Activated CD4-positive, alpha-beta memory T cell treated with anti-CD3 and anti-CD28 coated beads for 36 hours (primary cell): ENCODE measurements at regions of chr5 and their contacts with region 1.

Region 1: GRCh38 chr5:134738133-134738962 is at the start of gene CAMLG:
- DNase-seq: peak; percentile 98
- H3K4me3 Mint-ChIP-seq: peak within 1 kb of the TSS; percentile 95
- H3K27ac Mint-ChIP-seq: peak within 1 kb of the TSS; percentile 89
- H3K4me1 Mint-ChIP-seq: peaks cover 24% of the 10 kb centered on the region
- H3K27me3 Mint-ChIP-seq: no peaks in the 10 kb centered on the region
- total RNA-seq, gene CAMLG: 40.3 to 41.2 TPM

Region 2: GRCh38 chr5:134176511-134177368 is 561.6 kb before region 1 on chr5 and contains the start of gene SKP1:
- CTCF ChIA-PET with region 1: no interaction called
- POLR2A ChIA-PET with region 1: no interaction called
- intact Hi-C with region 1: loop called (anchors 1 kb)
- DNase-seq: peak; percentile 88
- H3K4me3 Mint-ChIP-seq: peak within 1 kb of the TSS; percentile 95
- H3K27ac Mint-ChIP-seq: peak within 1 kb of the TSS; percentile 96
- H3K4me1 Mint-ChIP-seq: peaks cover 33% of the 10 kb centered on the region
- H3K27me3 Mint-ChIP-seq: no peaks in the 10 kb centered on the region
- total RNA-seq, gene SKP1: 284 to 286 TPM

Region 3: GRCh38 chr5:134609232-134609851 is 129.0 kb before region 1 on chr5:
- CTCF ChIA-PET with region 1: interaction called, 4 read pairs
- POLR2A ChIA-PET with region 1: interaction called, 4 read pairs
- intact Hi-C with region 1: loop called (anchors 2 kb)
- DNase-seq: peak; percentile 19
- H3K4me3 Mint-ChIP-seq: peak overlapping the region; percentile 52
- H3K27ac Mint-ChIP-seq: peak overlapping the region; percentile 97
- H3K4me1 Mint-ChIP-seq: peaks cover 54% of the 10 kb centered on the region
- H3K27me3 Mint-ChIP-seq: no peaks in the 10 kb centered on the region

Region 4: GRCh38 chr5:134749415-134749814 is 11.1 kb after region 1 on chr5:
- CTCF ChIA-PET with region 1: interaction called, 19 read pairs
- POLR2A ChIA-PET with region 1: no interaction called
- intact Hi-C with region 1: no loop called
- DNase-seq: no peak
- H3K4me3 Mint-ChIP-seq: no peak overlapping the region
- H3K27ac Mint-ChIP-seq: no peak overlapping the region
- H3K4me1 Mint-ChIP-seq: no peaks in the 10 kb centered on the region
- H3K27me3 Mint-ChIP-seq: no peaks in the 10 kb centered on the region

Region 5: GRCh38 chr5:134794082-134794481 is 55.7 kb after region 1 on chr5:
- CTCF ChIA-PET with region 1: no interaction called
- POLR2A ChIA-PET with region 1: no interaction called
- intact Hi-C with region 1: no loop called
- DNase-seq: no peak
- H3K4me3 Mint-ChIP-seq: no peak overlapping the region
- H3K27ac Mint-ChIP-seq: no peak overlapping the region
- H3K4me1 Mint-ChIP-seq: peaks cover 10% of the 10 kb centered on the region
- H3K27me3 Mint-ChIP-seq: no peaks in the 10 kb centered on the region

Region 6: DNA sequence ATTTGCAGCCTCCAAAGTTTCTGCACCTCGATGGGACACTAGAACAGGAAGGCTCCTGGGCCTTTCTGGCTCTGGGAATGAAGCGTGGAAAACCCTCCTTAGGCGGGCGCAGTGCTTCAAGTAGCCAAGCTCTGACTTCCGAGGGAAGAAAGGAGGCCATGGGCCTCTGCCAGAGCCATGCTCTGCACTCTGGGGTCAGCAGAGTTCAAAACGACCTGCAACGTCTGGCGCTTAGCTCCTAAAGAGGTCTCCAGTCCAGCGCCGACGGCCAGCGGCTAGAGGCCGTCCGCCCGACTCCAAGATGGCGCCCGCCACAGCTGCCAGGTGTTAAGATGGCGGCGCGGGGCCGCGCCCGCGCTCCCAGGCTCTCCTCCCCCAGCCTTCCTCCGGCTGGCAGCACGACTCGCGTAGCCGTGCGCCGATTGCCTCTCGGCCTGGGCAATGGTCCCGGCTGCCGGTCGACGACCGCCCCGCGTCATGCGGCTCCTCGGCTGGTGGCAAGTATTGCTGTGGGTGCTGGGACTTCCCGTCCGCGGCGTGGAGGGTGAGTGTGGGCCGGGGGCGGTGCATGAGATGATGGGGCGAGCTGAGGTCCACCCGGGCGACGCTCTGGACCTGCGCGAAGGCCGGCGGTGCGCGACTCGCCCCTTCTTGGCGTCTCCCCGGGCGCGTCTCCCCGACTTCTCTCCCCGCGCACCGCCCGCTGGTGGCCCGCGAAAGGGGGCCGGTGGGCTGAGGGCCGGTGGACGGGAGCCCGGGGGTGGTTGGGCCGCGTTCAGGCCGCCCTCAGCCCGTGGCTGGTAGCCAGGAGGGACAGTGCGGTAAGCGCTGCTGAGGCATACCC is 135.9 kb after region 1 on chr5 and contains the start of gene TXNDC15:
- CTCF ChIA-PET with region 1: interaction called, 3 read pairs
- POLR2A ChIA-PET with region 1: interaction called, 11 read pairs
- intact Hi-C with region 1: loop called (anchors 1 kb)
- DNase-seq: peak; percentile 89
- H3K4me3 Mint-ChIP-seq: peak within 1 kb of the TSS; percentile 95
- H3K27ac Mint-ChIP-seq: peak within 1 kb of the TSS; percentile 94
- H3K4me1 Mint-ChIP-seq: peaks cover 36% of the 10 kb centered on the region
- H3K27me3 Mint-ChIP-seq: no peaks in the 10 kb centered on the region
- total RNA-seq, gene TXNDC15: 29.6 to 30.9 TPM